ENCODE measurements at regions of chr13 and their contacts with region 1.

Region 1: DNA sequence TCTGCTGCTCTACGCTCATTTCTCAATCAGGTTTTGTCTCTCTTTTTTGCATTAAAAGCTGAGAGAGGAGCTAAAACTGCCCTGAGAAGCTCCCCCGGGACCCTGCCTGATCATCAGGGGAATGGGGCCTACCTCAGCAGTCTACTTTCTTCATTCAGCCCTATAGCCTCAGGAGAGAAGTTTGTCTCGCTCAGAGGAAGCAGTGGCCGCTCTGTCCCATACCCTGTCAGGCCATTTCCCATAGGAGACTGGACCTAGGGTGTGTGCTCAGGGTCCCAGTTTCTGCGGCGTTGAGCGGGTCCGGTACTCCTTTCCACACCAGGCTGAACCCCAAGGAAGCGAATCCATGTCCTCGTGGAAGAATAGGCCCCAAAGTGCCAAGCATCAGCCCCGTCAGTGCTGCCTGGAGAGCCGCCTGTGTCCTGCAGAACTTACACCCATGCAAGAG is 21.7 kb downstream of the UBE2L5 start:
- DNase-seq: peak; percentile 83
- ATAC-seq: peak; percentile 87
- H3K4me3 ChIP-seq: peak overlapping the region in 4 of 5 experiments; percentile 4 to 44 (median 30)
- H3K4me3 Mint-ChIP-seq: peak overlapping the region; percentile 89
- H3K27ac ChIP-seq: peak overlapping the region; percentile 82 to 88
- H3K27ac Mint-ChIP-seq: peak overlapping the region; percentile 89
- H3K4me1 ChIP-seq: peaks cover 61 to 65% of the 10 kb centered on the region in 2 donors
- H3K4me1 Mint-ChIP-seq: peaks cover 64% of the 10 kb centered on the region
- H3K27me3 ChIP-seq: no peaks in the 10 kb centered on the region
- H3K27me3 Mint-ChIP-seq: no peaks in the 10 kb centered on the region
- CTCF ChIP-seq: no peak

Region 2: DNA sequence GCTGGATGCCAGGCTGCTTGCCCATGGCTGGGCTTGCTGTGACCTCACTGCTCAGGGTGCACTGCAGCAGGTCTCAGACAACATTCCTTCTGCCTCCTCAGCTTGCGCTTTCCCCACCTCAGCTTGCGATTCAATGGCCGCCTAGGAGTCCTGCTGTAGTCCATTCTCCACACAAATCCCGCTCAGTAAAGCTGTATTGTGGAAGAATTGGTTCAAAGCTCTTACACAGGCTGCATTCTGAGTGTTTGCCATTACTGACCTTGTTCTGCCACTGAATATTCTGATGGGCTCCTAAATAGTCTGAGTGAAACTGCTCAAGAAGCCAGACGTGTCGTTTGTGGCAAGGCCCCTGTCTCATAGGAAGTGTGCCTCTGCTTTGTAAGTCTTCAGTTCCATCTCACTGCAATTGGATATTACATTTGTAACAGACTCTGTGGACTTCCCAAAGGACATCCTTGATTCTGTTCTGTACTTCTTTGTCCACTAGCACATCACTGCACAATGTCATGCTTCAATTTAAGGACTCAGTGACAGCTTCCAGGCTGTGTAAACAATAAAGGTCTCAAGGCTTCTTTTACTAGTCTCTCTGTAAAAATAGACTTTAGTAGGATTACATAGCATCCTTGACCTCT is 186.4 kb before region 1 on chr13:
- CTCF ChIA-PET with region 1: no interaction called
- POLR2A ChIA-PET with region 1: no interaction called
- intact Hi-C with region 1: no loop called
- DNase-seq: no peak
- ATAC-seq: no peak
- H3K4me3 ChIP-seq: no peak overlapping the region
- H3K4me3 Mint-ChIP-seq: no peak overlapping the region
- H3K27ac ChIP-seq: no peak overlapping the region
- H3K27ac Mint-ChIP-seq: peak overlapping the region; percentile 21
- H3K4me1 ChIP-seq: peaks cover 5 to 6% of the 10 kb centered on the region in 2 donors
- H3K4me1 Mint-ChIP-seq: peaks cover 13% of the 10 kb centered on the region
- H3K27me3 ChIP-seq: no peaks in the 10 kb centered on the region
- H3K27me3 Mint-ChIP-seq: no peaks in the 10 kb centered on the region
- CTCF ChIP-seq: no peak

Region 3: GRCh38 chr13:30306762-30307193 is 137.2 kb before region 1 on chr13:
- CTCF ChIA-PET with region 1: interaction called, 3 read pairs
- POLR2A ChIA-PET with region 1: interaction called, 3 read pairs
- intact Hi-C with region 1: loop called (anchors 5 kb)
- DNase-seq: peak; percentile 96
- ATAC-seq: peak; percentile 89
- H3K4me3 ChIP-seq: peak overlapping the region; percentile 70 to 97 (median 83)
- H3K4me3 Mint-ChIP-seq: peak overlapping the region; percentile 85
- H3K27ac ChIP-seq: peak overlapping the region; percentile 71 to 87
- H3K27ac Mint-ChIP-seq: peak overlapping the region; percentile 86
- H3K4me1 ChIP-seq: peaks cover 28 to 45% of the 10 kb centered on the region in 2 donors
- H3K4me1 Mint-ChIP-seq: peaks cover 55% of the 10 kb centered on the region
- H3K27me3 ChIP-seq: no peaks in the 10 kb centered on the region
- H3K27me3 Mint-ChIP-seq: no peaks in the 10 kb centered on the region
- CTCF ChIP-seq: no peak

Region 4: DNA sequence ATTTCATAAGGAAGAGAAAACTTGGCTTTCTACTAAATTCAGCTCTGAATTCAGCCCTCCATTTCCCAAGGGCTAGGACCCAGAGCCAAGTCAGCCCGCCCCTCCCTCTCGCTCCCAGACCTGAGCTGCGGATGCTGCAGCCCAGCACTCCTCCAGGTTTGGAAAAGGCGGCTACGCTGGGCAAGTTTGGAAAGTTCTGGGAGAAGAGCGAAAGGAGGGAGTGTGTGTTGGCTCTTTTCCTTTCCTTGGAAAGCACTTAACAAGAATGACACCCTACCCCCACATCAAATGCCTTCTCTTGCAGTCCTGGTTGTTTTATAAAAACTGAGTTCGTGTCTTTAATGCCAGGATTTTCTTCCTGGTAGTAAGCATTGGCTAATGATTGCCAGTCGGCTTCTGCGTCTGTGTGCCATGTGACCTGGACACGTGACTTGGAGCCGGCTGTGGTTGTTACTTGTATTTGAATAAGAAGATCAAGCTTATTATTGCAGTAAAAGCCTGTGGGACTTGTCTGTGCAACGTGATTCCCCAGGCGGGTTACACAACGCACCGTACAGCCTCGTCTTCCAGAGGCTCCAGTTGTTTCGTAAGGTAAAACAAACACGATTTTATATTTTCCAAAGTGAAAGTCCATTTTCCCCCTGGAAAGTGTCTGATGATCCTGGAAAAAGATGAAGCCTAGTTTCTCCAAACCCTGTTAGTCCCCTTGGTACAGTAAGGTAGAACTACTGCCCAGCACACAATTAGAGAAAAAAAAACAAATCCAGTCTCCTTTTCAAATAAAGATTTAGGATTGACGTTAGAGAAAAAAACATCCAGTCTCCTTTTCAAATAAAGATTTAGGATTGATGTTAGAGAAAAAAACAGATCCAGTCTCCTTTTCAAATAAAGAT is 48.5 kb before region 1 on chr13:
- CTCF ChIA-PET with region 1: interaction called, 7 read pairs
- POLR2A ChIA-PET with region 1: interaction called, 5 read pairs
- intact Hi-C with region 1: loop called (anchors 1 kb)
- DNase-seq: peak; percentile 86
- ATAC-seq: peak; percentile 79
- H3K4me3 ChIP-seq: peak overlapping the region; percentile 62 to 96 (median 77)
- H3K4me3 Mint-ChIP-seq: peak overlapping the region; percentile 98
- H3K27ac ChIP-seq: peak overlapping the region; percentile 92
- H3K27ac Mint-ChIP-seq: peak overlapping the region; percentile 99
- H3K4me1 ChIP-seq: peaks cover 10 to 15% of the 10 kb centered on the region in 2 donors
- H3K4me1 Mint-ChIP-seq: peaks cover 24% of the 10 kb centered on the region
- H3K27me3 ChIP-seq: no peaks in the 10 kb centered on the region
- H3K27me3 Mint-ChIP-seq: no peaks in the 10 kb centered on the region
- CTCF ChIP-seq: no peak

Region 5: DNA sequence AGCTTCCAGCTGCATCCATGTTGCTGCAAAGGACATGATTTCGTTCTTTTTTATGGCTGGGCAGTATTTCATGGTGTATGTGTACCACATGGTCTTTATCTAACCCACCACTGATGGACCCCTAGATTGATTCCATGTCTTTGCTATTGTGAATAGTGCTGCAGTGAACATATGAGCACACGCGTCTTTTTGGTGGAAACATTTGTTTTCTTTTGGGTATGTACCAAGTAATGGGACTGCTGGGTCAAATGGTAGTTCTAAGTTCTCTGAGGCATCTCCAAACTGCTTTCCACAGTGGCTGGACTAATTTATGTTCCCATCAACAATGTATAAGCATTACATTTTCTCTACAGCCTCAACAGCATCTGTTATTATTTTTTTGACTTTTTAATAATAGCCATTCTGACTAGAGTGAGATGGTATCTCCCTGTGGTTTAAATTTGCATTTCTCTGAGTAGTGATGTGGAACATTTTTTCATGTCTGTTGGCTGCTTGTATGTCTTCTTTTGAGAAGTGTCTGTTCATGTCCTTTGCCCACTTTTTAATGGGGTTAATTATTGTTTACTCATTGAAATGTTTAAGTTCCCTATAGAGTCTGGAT is 28.5 kb before region 1 on chr13:
- CTCF ChIA-PET with region 1: interaction called, 47 read pairs
- POLR2A ChIA-PET with region 1: interaction called, 9 read pairs
- intact Hi-C with region 1: no loop called
- DNase-seq: peak; percentile 77
- ATAC-seq: peak; percentile 78
- H3K4me3 ChIP-seq: peak overlapping the region in 4 of 5 experiments; percentile 3 to 65 (median 45)
- H3K4me3 Mint-ChIP-seq: peak overlapping the region; percentile 80
- H3K27ac ChIP-seq: peak overlapping the region; percentile 26 to 88
- H3K27ac Mint-ChIP-seq: peak overlapping the region; percentile 91
- H3K4me1 ChIP-seq: peaks cover 44 to 70% of the 10 kb centered on the region in 2 donors
- H3K4me1 Mint-ChIP-seq: peaks cover 79% of the 10 kb centered on the region
- H3K27me3 ChIP-seq: no peaks in the 10 kb centered on the region
- H3K27me3 Mint-ChIP-seq: no peaks in the 10 kb centered on the region
- CTCF ChIP-seq: no peak

Region 6: GRCh38 chr13:30422054-30422839 is 21.7 kb before region 1 on chr13 and contains the start of gene UBE2L5:
- CTCF ChIA-PET with region 1: interaction called, 8 read pairs
- POLR2A ChIA-PET with region 1: interaction called, 35 read pairs
- intact Hi-C with region 1: loop called (anchors 1 kb)
- DNase-seq: peak; percentile 85
- ATAC-seq: peak; percentile 93
- H3K4me3 ChIP-seq: peak within 1 kb of the TSS; percentile 57 to 83 (median 77)
- H3K4me3 Mint-ChIP-seq: peak within 1 kb of the TSS; percentile 92
- H3K27ac ChIP-seq: peak within 1 kb of the TSS; percentile 45 to 71
- H3K27ac Mint-ChIP-seq: peak within 1 kb of the TSS; percentile 90
- H3K4me1 ChIP-seq: peaks cover 18 to 42% of the 10 kb centered on the region in 2 donors
- H3K4me1 Mint-ChIP-seq: peaks cover 47% of the 10 kb centered on the region
- H3K27me3 ChIP-seq: no peaks in the 10 kb centered on the region
- H3K27me3 Mint-ChIP-seq: no peaks in the 10 kb centered on the region
- CTCF ChIP-seq: no peak
- total RNA-seq, gene UBE2L5: 0.57 and 0.58 TPM in 2 replicates

Region 7: GRCh38 chr13:30429721-30430694 is 14.0 kb before region 1 on chr13:
- CTCF ChIA-PET with region 1: interaction called, 15 read pairs
- POLR2A ChIA-PET with region 1: interaction called, 12 read pairs
- intact Hi-C with region 1: loop called (anchors 1 kb)
- DNase-seq: no peak
- ATAC-seq: peak; percentile 76
- H3K4me3 ChIP-seq: no peak overlapping the region
- H3K4me3 Mint-ChIP-seq: peak overlapping the region; percentile 72
- H3K27ac ChIP-seq: no peak overlapping the region
- H3K27ac Mint-ChIP-seq: peak overlapping the region; percentile 75
- H3K4me1 ChIP-seq: peaks cover 21 to 30% of the 10 kb centered on the region in 2 donors
- H3K4me1 Mint-ChIP-seq: peaks cover 30% of the 10 kb centered on the region
- H3K27me3 ChIP-seq: no peaks in the 10 kb centered on the region
- H3K27me3 Mint-ChIP-seq: no peaks in the 10 kb centered on the region
- CTCF ChIP-seq: no peak

Region 8: GRCh38 chr13:32086791-32087441 is 1642.9 kb after region 1 on chr13:
- CTCF ChIA-PET with region 1: no interaction called
- POLR2A ChIA-PET with region 1: no interaction called
- intact Hi-C with region 1: no loop called
- DNase-seq: no peak
- ATAC-seq: no peak
- H3K4me3 ChIP-seq: no peak overlapping the region
- H3K4me3 Mint-ChIP-seq: no peak overlapping the region
- H3K27ac ChIP-seq: no peak overlapping the region
- H3K27ac Mint-ChIP-seq: no peak overlapping the region
- H3K4me1 ChIP-seq: no peaks in the 10 kb centered on the region
- H3K4me1 Mint-ChIP-seq: no peaks in the 10 kb centered on the region
- H3K27me3 ChIP-seq: no peaks in the 10 kb centered on the region
- H3K27me3 Mint-ChIP-seq: no peaks in the 10 kb centered on the region
- CTCF ChIP-seq: no peak

Measured in B cell (primary cell).